ENCODE measurements at regions of chr2 and their contacts with region 1.

Region 1: GRCh38 chr2:134454931-134455330 is 201.1 kb downstream of the MGAT5 start:
- DNase-seq: no peak
- H3K4me3 ChIP-seq: no peak overlapping the region
- H3K27ac ChIP-seq: no peak overlapping the region
- H3K4me1 ChIP-seq: peaks cover 5% of the 10 kb centered on the region
- H3K27me3 ChIP-seq: no peaks in the 10 kb centered on the region
- CTCF ChIP-seq: no peak
- POLR2A ChIP-seq: no peak

Region 2: DNA sequence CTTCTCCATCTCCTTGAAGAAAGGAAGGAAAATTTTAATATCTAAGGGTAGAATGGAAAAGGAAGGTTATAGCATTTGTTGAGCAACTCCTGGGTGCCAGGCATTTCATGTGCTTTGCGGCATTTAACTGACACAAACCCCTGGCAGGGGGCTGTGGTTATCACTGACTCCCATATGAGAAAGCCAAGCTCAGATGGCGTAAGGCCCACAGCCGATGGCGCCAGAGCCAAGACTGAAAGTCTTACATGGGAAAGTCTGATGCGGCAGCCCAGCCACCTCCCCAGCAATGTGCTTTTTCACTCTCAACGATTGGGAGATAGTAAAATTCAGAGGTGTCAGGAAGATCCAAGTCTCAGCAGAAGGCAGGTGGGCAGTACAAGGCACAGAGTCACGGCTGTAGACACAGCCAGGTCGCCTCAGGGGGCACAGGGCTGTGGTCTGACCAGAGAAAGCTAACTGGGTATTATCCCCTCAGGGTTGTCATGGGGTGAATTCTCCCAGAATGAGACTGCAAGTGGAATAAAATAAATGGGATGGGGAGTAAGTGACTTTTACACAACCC is 562.5 kb before region 1 on chr2:
- CTCF ChIA-PET with region 1: interaction called, 155 read pairs
- POLR2A ChIA-PET with region 1: no interaction called
- dilution Hi-C with region 1: no loop called
- intact Hi-C with region 1: loop called (anchors 1 kb)
- DNase-seq: no peak
- H3K4me3 ChIP-seq: no peak overlapping the region
- H3K27ac ChIP-seq: no peak overlapping the region
- H3K4me1 ChIP-seq: no peaks in the 10 kb centered on the region
- H3K27me3 ChIP-seq: peaks cover 0 to 24% of the 10 kb centered on the region in 2 experiments
- CTCF ChIP-seq: no peak
- POLR2A ChIP-seq: no peak

Region 3: GRCh38 chr2:134228493-134228903 is 226.4 kb before region 1 on chr2:
- CTCF ChIA-PET with region 1: interaction called, 9 read pairs
- POLR2A ChIA-PET with region 1: no interaction called
- dilution Hi-C with region 1: no loop called
- intact Hi-C with region 1: loop called (anchors 2 kb)
- DNase-seq: no peak
- H3K4me3 ChIP-seq: no peak overlapping the region
- H3K27ac ChIP-seq: no peak overlapping the region
- H3K4me1 ChIP-seq: no peaks in the 10 kb centered on the region
- H3K27me3 ChIP-seq: no peaks in the 10 kb centered on the region
- CTCF ChIP-seq: peak; percentile 35 to 40
- POLR2A ChIP-seq: no peak

Region 4: GRCh38 chr2:134307334-134307733 is 147.6 kb before region 1 on chr2:
- CTCF ChIA-PET with region 1: interaction called, 11 read pairs
- POLR2A ChIA-PET with region 1: no interaction called
- dilution Hi-C with region 1: no loop called
- intact Hi-C with region 1: loop called (anchors 2 kb)
- DNase-seq: peak; percentile 91
- H3K4me3 ChIP-seq: peak overlapping the region in 1 of 3 experiments; percentile 26
- H3K27ac ChIP-seq: peak overlapping the region; percentile 91
- H3K4me1 ChIP-seq: peaks cover 72% of the 10 kb centered on the region
- H3K27me3 ChIP-seq: no peaks in the 10 kb centered on the region
- CTCF ChIP-seq: no peak
- POLR2A ChIP-seq: peak; percentile 56

Region 5: GRCh38 chr2:134391751-134392160 is 63.2 kb before region 1 on chr2:
- CTCF ChIA-PET with region 1: interaction called, 48 read pairs
- POLR2A ChIA-PET with region 1: no interaction called
- dilution Hi-C with region 1: no loop called
- intact Hi-C with region 1: no loop called
- DNase-seq: no peak
- H3K4me3 ChIP-seq: no peak overlapping the region
- H3K27ac ChIP-seq: no peak overlapping the region
- H3K4me1 ChIP-seq: no peaks in the 10 kb centered on the region
- H3K27me3 ChIP-seq: no peaks in the 10 kb centered on the region
- CTCF ChIP-seq: no peak
- POLR2A ChIP-seq: no peak

Region 6: GRCh38 chr2:134431838-134432434 is 23.0 kb before region 1 on chr2:
- CTCF ChIA-PET with region 1: interaction called, 94 read pairs
- POLR2A ChIA-PET with region 1: no interaction called
- dilution Hi-C with region 1: no loop called
- intact Hi-C with region 1: no loop called
- DNase-seq: peak; percentile 55
- H3K4me3 ChIP-seq: no peak overlapping the region
- H3K27ac ChIP-seq: peak overlapping the region; percentile 45
- H3K4me1 ChIP-seq: peaks cover 33% of the 10 kb centered on the region
- H3K27me3 ChIP-seq: no peaks in the 10 kb centered on the region
- CTCF ChIP-seq: no peak
- POLR2A ChIP-seq: no peak

Region 7: DNA sequence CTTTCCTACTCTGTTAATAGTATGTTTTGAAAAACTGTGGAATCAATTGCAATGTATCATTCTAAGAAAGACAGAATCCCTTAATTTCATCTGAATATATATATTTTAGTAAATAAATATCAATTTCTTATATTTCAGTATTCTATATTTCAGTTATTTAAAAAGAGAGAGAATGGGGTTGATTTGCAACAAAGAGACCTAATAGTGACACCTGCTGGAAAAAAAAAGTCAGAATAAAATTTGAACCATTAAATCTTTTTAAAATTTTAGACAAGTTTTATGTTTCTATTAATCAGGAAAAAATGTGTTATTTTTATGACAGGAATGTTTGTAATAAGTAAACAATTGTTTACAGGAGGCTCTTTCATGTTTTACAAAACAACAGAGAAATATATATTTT is 443.0 kb after region 1 on chr2:
- CTCF ChIA-PET with region 1: interaction called, 44 read pairs
- POLR2A ChIA-PET with region 1: no interaction called
- dilution Hi-C with region 1: no loop called
- intact Hi-C with region 1: loop called (anchors 1 kb)
- DNase-seq: peak; percentile 20
- H3K4me3 ChIP-seq: no peak overlapping the region
- H3K27ac ChIP-seq: no peak overlapping the region
- H3K4me1 ChIP-seq: no peaks in the 10 kb centered on the region
- H3K27me3 ChIP-seq: no peaks in the 10 kb centered on the region
- CTCF ChIP-seq: peak in 1 of 2 donors; percentile 6
- POLR2A ChIP-seq: no peak